ENCODE measurements at regions of chr6 and their contacts with region 1.

Region 1: GRCh38 chr6:31652925-31653718 is 661 bp upstream of the BAG6 start:
- DNase-seq: no peak
- H3K4me3 Mint-ChIP-seq: peak overlapping the region; percentile 87
- H3K27ac Mint-ChIP-seq: peak overlapping the region; percentile 100
- H3K4me1 Mint-ChIP-seq: peaks cover 44% of the 10 kb centered on the region
- H3K27me3 Mint-ChIP-seq: no peaks in the 10 kb centered on the region

Region 2: DNA sequence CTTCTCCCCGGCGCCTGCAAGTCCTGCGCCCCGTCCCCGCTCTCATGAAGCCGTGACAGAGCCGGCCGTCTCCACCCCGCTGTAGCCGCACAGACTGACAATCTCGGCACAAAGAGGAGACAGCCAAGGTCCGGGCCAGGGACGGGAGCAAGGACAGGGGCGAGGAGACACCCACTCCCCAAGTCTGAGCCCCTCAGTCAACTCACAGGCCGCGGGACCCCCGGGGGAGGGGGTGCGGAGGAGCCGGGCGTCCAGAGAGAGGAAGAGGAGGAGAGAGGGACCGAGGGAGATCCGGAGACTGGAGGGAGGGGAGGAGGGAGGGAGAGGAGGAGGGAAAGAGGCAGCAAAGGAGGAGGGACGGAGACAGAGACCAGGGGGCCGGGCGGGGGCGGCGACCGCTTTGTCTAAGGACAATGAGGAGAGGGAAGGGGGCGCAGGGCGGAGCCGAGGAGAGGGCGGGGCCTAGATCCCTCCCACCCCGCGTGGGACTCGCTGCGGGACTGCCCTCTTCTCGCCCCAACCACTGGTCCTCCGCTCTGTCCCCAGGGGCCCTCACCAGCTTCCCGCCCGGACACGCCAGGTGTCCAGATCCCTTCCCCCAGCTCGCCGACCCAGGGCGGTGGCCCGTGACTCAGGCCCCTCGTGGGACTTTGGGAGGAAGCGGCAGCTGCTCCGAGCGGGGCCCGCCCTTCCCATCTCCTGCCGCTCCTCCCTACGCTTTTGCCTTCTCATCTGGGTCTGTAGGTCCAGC is 966.0 kb before region 1 on chr6:
- intact Hi-C with region 1: loop called (anchors 5 kb)
- DNase-seq: peak; percentile 79
- H3K4me3 Mint-ChIP-seq: peak overlapping the region; percentile 97
- H3K27ac Mint-ChIP-seq: peak overlapping the region; percentile 93
- H3K4me1 Mint-ChIP-seq: peaks cover 33% of the 10 kb centered on the region
- H3K27me3 Mint-ChIP-seq: no peaks in the 10 kb centered on the region

Region 3: DNA sequence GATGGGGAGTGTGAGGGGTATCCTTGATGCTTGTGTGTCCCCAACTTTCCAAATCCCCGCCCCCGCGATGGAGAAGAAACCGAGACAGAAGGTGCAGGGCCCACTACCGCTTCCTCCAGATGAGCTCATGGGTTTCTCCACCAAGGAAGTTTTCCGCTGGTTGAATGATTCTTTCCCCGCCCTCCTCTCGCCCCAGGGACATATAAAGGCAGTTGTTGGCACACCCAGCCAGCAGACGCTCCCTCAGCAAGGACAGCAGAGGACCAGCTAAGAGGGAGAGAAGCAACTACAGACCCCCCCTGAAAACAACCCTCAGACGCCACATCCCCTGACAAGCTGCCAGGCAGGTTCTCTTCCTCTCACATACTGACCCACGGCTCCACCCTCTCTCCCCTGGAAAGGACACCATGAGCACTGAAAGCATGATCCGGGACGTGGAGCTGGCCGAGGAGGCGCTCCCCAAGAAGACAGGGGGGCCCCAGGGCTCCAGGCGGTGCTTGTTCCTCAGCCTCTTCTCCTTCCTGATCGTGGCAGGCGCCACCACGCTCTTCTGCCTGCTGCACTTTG is 77.7 kb before region 1 on chr6 and contains the start of gene TNF:
- intact Hi-C with region 1: loop called (anchors 2 kb)
- DNase-seq: peak; percentile 74
- H3K4me3 Mint-ChIP-seq: peak within 1 kb of the TSS; percentile 92
- H3K27ac Mint-ChIP-seq: peak within 1 kb of the TSS; percentile 95
- H3K4me1 Mint-ChIP-seq: peaks cover 77% of the 10 kb centered on the region
- H3K27me3 Mint-ChIP-seq: peaks cover 4% of the 10 kb centered on the region
- total RNA-seq, gene TNF: 94.4 and 96.8 TPM in 2 replicates

Region 4: DNA sequence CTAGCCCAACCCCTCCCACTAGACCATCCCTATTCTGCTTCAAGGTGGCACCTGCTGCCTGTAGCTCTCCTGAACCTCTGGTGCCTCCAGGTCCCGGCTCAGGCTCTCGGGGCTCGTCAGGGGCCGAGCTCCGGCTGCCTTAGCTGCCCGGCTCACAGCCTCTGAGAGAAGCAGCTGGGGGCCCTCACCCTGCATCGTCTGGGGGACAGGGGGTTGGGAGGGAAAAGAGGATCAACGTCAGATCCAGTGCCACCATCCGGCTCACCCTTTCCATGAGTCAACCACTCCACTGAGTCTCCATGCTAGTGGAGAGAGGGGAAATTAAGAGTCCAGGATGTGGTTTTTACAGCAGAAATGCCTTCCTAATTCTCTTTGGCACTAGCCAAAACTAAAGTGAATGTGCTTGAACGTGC is 13.7 kb before region 1 on chr6:
- intact Hi-C with region 1: no loop called
- DNase-seq: no peak
- H3K4me3 Mint-ChIP-seq: no peak overlapping the region
- H3K27ac Mint-ChIP-seq: peak overlapping the region; percentile 60
- H3K4me1 Mint-ChIP-seq: peaks cover 6% of the 10 kb centered on the region
- H3K27me3 Mint-ChIP-seq: no peaks in the 10 kb centered on the region

Region 5: GRCh38 chr6:31665501-31666336 is 12.6 kb after region 1 on chr6 and contains the start of gene CSNK2B:
- intact Hi-C with region 1: loop called (anchors 1 kb)
- DNase-seq: peak; percentile 98
- H3K4me3 Mint-ChIP-seq: peak within 1 kb of the TSS; percentile 96
- H3K27ac Mint-ChIP-seq: peak within 1 kb of the TSS; percentile 94
- H3K4me1 Mint-ChIP-seq: peaks cover 43% of the 10 kb centered on the region
- H3K27me3 Mint-ChIP-seq: no peaks in the 10 kb centered on the region
- total RNA-seq, gene CSNK2B: 266 and 279 TPM in 2 replicates

Region 6: GRCh38 chr6:32177788-32178546 is 524.8 kb after region 1 on chr6 and contains the start of gene RNF5:
- intact Hi-C with region 1: loop called (anchors 10 kb)
- DNase-seq: peak; percentile 93
- H3K4me3 Mint-ChIP-seq: peak within 1 kb of the TSS; percentile 96
- H3K27ac Mint-ChIP-seq: peak within 1 kb of the TSS; percentile 97
- H3K4me1 Mint-ChIP-seq: peaks cover 50% of the 10 kb centered on the region
- H3K27me3 Mint-ChIP-seq: no peaks in the 10 kb centered on the region
- total RNA-seq, gene RNF5: 61.9 and 63.8 TPM in 2 replicates